CD14-positive monocyte (primary cell): ENCODE measurements at regions of chr11 and their contacts with region 1.

Region 1: DNA sequence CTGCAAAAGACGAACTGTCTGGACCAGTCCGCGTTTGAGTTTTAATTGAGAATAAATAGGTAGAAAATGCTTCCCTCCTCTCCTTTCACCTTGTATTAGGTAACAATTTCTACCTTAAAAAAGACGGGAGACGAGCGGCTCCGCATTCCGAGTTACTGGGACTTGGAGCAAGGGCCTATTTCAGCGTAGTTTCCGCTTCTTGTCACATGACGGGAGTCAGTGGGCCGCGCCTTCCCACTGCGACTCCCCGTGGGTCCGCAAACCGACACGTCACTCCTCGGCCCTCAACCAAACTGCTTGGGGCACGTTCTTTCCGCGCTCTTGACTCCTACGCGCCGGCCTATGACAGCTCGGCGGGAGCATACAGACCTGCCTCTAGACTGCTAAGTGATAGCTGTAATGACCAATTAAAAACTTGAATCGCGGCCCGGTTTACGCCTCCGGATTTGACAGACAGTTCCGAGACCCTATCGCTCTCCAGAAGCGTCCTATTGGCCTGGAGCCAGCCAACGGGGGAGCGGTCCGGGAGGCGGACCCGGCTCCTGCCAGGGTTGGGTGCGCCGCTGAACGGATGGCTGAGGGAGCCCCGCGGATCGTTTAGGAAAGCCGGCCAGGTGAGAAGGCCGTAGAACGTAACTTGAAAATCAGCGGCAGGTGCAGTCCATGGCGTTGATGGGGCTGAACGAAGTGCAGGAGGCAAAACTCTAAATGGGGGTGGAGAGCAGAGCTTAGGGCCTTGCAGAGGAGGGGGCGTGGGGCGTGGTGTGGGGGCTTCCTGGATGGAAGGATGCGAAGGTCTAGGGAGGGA is at the start of gene STT3A:
- DNase-seq: peak; percentile 99 to 100 (median 100)
- H3K4me3 ChIP-seq: peak within 1 kb of the TSS; percentile 75 to 100 (median 84)
- H3K4me3 Mint-ChIP-seq: peak within 1 kb of the TSS; percentile 93 to 99
- H3K27ac ChIP-seq: peak within 1 kb of the TSS; percentile 94 to 99
- H3K27ac Mint-ChIP-seq: peak within 1 kb of the TSS; percentile 97 to 99 (median 98)
- H3K4me1 ChIP-seq: peaks cover 26 to 27% of the 10 kb centered on the region in 2 donors
- H3K4me1 Mint-ChIP-seq: peaks cover 27% of the 10 kb centered on the region
- H3K27me3 ChIP-seq: no peaks in the 10 kb centered on the region
- H3K27me3 Mint-ChIP-seq: peaks cover 0 to 3% (median 2%) of the 10 kb centered on the region in 3 donors
- CTCF ChIP-seq: no peak
- polyA plus RNA-seq, gene STT3A: 27.4 to 75.3 (median 54.2) TPM

Region 2: DNA sequence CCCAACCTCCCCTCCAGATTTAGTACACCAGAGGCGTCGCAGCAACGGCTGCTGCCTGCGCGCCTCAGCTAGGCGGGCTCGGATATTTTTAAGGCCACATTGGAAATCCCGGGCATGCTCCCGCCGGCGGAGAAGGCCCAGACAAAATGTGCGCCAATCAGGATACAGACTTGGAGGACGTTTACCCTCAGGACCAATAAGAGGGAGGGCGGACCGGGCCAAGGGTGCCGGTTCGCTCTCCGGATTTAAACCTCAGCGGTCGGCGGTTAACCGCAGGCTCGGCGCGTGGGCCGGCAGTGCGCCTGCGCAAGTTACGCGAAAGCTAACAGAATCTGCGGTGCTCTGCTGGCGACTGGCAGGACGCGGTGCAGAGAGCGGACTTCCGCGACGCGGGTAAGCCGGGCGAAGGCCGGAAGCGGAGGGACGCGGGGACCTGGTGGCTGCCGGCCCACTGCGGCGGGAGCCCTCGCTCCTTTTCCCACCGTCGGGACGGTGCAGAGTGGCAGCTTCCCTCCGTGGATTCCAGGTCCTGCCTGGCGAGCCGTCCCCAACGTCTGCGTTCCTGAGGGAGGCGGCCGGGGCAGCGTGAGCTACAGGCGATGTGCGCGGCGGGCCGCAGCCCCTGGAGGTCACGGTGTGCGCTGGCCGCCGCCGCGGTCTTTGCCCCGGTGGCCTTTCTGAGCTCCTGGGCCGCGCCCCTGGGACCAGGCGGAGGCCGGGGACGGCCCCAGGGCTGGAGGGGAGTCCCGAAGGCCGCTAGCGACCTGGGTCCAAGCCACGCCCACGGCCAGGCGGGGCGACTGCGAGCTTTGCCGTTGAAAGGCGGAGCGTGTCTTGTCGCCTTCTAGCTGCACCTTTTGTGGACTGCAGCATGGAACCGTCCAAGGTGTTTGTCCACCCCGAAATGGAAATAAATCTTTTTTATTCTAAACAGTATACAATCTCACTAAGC is 295.1 kb after region 1 on chr11 and contains the start of gene HYLS1:
- intact Hi-C with region 1: loop called in 1 of 2 experiments (anchors 10 kb)
- DNase-seq: peak; percentile 95 to 98 (median 97)
- H3K4me3 ChIP-seq: peak within 1 kb of the TSS; percentile 58 to 93 (median 68)
- H3K4me3 Mint-ChIP-seq: peak within 1 kb of the TSS; percentile 89 to 90
- H3K27ac ChIP-seq: peak within 1 kb of the TSS; percentile 83 to 85
- H3K27ac Mint-ChIP-seq: peak within 1 kb of the TSS; percentile 78 to 93 (median 91)
- H3K4me1 ChIP-seq: peaks cover 17 to 25% of the 10 kb centered on the region in 2 donors
- H3K4me1 Mint-ChIP-seq: peaks cover 32% of the 10 kb centered on the region
- H3K27me3 ChIP-seq: no peaks in the 10 kb centered on the region
- H3K27me3 Mint-ChIP-seq: peaks cover 1 to 9% (median 5%) of the 10 kb centered on the region in 3 donors
- CTCF ChIP-seq: no peak
- polyA plus RNA-seq, gene HYLS1: 0.61 to 2.6 (median 2.0) TPM

Region 3: DNA sequence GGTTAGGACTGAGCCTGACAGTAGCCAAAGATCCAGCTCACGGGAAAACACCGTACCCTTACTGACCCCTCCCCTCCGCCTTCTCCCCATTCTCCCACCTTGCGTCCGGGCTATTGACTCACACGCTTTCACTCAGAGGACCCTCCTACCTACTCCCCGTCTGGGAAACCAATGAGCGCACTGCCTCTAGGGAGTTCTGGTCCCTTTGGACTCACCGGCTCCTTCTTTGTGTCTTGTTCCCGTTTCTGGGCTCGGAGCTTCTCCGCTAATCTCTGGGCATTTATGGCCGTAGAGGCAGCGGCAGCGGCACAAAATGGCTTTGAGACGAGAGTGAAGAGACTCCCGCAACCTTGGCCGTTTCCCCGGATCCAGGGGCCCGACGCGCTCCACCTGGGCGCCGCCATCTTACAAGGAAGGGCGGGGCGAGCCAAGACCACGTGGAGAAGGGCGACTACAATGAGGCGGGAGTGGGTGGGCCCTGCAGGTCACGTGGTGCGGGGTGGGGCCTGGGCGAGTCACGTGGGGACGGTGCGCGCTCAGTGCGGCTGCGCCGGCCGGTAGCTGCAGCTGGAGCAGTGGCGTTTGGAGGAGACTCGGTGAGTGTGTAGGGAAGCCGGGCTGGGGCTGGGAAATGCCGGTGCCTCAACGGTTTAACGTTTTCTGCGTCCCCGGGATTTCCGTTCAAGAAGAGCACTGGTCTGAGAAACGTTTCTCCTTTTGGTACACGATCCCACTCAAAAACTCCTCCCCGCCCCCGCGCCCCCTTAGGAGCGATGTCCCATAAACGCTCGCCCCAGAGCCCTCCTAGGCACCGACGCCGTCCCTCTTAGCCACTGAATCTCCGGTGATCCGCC is 619.0 kb after region 1 on chr11 and contains the starts of genes FAM118B and RPUSD4:
- intact Hi-C with region 1: loop called in 1 of 2 experiments (anchors 10 kb)
- DNase-seq: peak; percentile 93 to 97 (median 95)
- H3K4me3 ChIP-seq: peak within 1 kb of the TSS; percentile 62 to 98 (median 95)
- H3K4me3 Mint-ChIP-seq: peak within 1 kb of the TSS; percentile 97 to 99
- H3K27ac ChIP-seq: peak within 1 kb of the TSS; percentile 31 to 80
- H3K27ac Mint-ChIP-seq: peak within 1 kb of the TSS; percentile 90 to 95 (median 92)
- H3K4me1 ChIP-seq: peaks cover 45 to 47% of the 10 kb centered on the region in 2 donors
- H3K4me1 Mint-ChIP-seq: peaks cover 48% of the 10 kb centered on the region
- H3K27me3 ChIP-seq: no peaks in the 10 kb centered on the region
- H3K27me3 Mint-ChIP-seq: peaks cover 0 to 3% (median 0%) of the 10 kb centered on the region in 3 donors
- CTCF ChIP-seq: no peak
- polyA plus RNA-seq, gene FAM118B: 13.6 to 18.7 (median 16.5) TPM
- polyA plus RNA-seq, gene RPUSD4: 9.0 to 15.5 (median 10.3) TPM

Region 4: DNA sequence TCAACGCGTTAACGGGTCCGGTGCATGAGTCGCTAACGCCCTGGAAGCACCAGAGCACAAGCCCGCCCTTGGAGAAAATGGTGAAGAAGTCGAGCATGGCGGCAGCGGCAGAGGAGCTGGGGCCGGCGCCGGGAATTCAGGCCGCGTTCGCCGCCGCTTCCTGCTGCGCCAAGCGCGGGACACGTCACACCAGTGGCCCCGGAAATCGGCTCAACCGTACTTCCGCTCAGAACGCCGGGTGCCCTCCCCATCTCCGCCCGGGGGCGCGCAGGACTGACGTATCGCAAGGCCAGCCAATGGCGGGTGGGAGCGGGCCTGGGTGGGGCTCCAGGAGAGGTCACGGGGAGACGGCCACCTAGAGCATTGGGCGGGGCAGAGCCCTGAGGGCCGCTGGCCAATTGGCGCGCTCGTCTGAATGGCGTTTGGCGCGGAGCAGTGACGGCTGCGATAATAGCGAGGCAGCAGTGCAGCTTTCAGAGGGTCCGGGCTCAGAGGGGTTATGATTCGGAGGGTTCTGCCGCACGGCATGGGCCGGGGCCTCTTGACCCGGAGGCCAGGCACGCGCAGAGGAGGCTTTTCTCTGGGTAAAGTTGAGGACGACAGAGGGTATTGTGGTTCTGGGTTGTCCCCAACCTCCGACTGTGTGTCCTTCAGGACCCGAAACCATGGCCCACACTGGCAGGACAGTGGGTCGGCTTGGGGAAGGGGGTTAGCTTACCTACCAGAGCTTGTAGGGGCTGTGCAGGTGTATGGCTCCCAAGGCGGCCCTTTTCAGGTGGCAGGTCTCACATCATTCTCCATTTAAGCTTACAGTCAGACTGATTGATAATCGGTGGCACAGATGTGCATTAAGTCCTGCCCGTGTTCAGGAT is 676.4 kb after region 1 on chr11 and contains the starts of genes FOXRED1 and SRPRA:
- intact Hi-C with region 1: loop called in 1 of 2 experiments (anchors 5 kb)
- DNase-seq: peak; percentile 99 to 100 (median 99)
- H3K4me3 ChIP-seq: peak within 1 kb of the TSS; percentile 87 to 93 (median 89)
- H3K4me3 Mint-ChIP-seq: peak within 1 kb of the TSS; percentile 94 to 95
- H3K27ac ChIP-seq: peak within 1 kb of the TSS; percentile 76 to 99
- H3K27ac Mint-ChIP-seq: peak within 1 kb of the TSS; percentile 97 to 98 (median 97)
- H3K4me1 ChIP-seq: peaks cover 15 to 17% of the 10 kb centered on the region in 2 donors
- H3K4me1 Mint-ChIP-seq: peaks cover 18% of the 10 kb centered on the region
- H3K27me3 ChIP-seq: no peaks in the 10 kb centered on the region
- H3K27me3 Mint-ChIP-seq: no peaks in the 10 kb centered on the region
- CTCF ChIP-seq: no peak
- polyA plus RNA-seq, gene FOXRED1: 15.2 to 18.0 (median 15.4) TPM
- polyA plus RNA-seq, gene SRPRA: 68.7 to 123 (median 87.6) TPM